ENCODE measurements at regions of chr15 and their contacts with region 1.

Region 1: GRCh38 chr15:33737687-33738601 is 230.4 kb upstream of the CHRM5 start:
- ATAC-seq: peak; percentile 61 to 90 (median 80)
- H3K4me3 ChIP-seq: no peak overlapping the region
- H3K27ac ChIP-seq: no peak overlapping the region
- H3K4me1 ChIP-seq: peaks cover 0 to 11% of the 10 kb centered on the region in 2 donors

Region 2: GRCh38 chr15:32970847-32971246 is 767.1 kb before region 1 on chr15:
- in situ Hi-C with region 1: no loop called
- ATAC-seq: no peak
- H3K4me3 ChIP-seq: no peak overlapping the region
- H3K27ac ChIP-seq: no peak overlapping the region
- H3K4me1 ChIP-seq: no peaks in the 10 kb centered on the region

Region 3: DNA sequence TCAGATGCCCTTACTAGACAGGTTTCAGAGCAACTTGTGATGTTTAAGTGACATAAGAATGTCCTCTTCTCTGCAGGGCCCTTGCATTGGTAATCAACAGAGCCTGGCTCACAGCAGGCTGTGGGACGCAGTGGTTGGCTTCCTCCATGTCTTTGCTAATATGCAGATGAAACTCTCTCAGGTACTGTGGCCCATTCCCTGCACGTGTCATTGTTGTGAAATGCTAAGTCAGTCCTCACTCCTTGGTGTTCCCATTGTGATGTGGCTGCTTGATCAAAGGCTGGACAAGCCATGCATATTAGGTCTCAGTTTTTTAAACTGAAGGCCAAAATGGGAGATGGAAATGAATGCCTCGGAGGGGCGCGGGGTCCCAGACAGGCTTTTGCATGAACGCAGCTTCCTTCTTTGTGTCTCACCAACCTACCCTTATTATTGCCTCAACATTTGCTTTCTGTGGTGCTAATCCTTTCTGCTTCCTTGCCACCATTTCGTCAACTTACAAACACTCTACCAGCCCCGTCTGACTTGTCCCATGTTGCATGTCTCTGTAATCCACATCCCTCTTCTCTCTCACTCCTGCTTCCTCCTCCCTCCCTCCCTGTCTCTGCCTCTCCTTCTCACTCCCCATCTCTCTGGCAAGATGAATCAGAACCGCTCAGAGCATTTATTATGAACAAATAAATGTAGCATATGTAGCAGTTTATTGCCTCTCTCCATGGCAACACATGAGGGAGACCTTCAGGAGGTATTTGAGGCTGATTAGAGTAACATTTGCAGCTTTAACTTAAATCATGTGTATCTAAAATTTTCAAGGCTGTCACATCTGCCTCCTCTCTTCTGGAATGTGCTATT is 97.2 kb after region 1 on chr15:
- in situ Hi-C with region 1: loop called in 1 of 9 experiments (anchors 25 kb)
- ATAC-seq: peak in 7 of 8 experiments; percentile 25 to 68 (median 47)
- H3K4me3 ChIP-seq: no peak overlapping the region
- H3K27ac ChIP-seq: no peak overlapping the region
- H3K4me1 ChIP-seq: peaks cover 7 to 8% of the 10 kb centered on the region in 2 donors

Region 4: GRCh38 chr15:33915571-33916407 is 177.8 kb after region 1 on chr15:
- in situ Hi-C with region 1: no loop called
- ATAC-seq: peak in 4 of 8 experiments; percentile 40 to 96 (median 92)
- H3K4me3 ChIP-seq: no peak overlapping the region
- H3K27ac ChIP-seq: no peak overlapping the region
- H3K4me1 ChIP-seq: no peaks in the 10 kb centered on the region

Region 5: DNA sequence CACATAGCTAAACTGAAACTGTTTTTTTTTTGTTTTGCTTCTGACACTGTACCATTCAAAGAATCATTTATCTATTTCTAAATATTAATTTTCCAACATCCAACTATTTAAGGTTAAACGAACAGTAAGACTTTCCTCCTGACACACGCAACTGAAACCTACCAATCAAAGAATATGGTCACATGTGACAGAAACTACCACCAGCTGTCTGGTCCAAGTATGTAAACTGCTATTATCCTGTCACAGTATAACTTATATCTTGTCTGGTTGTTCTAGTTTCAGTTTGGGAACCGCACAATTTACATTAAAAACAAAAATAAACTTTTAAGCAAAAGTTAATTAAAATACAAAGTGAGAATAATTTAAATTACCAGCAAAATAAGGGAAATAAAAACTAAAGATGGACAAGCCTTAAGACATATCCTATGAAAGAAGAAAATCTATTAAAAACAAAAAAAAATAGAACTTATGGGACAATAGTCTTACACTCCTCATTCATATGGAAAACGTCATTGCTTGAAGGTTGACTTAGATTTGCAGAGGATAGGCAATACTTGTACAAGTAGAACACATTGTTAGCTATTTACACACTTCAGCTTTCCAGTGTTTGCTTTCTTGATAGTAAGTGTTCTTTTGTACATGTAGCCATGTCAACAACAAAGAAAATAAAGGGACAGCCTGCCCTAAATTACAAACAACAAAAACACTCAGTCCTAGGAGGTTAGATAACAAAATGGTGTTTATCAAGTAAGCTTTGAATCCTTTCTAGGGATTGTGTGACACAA is 203.5 kb after region 1 on chr15:
- in situ Hi-C with region 1: no loop called
- ATAC-seq: peak in 1 of 8 experiments; percentile 57
- H3K4me3 ChIP-seq: no peak overlapping the region
- H3K27ac ChIP-seq: no peak overlapping the region
- H3K4me1 ChIP-seq: no peaks in the 10 kb centered on the region

Region 6: GRCh38 chr15:33963831-33964664 is 226.1 kb after region 1 on chr15:
- in situ Hi-C with region 1: loop called in 2 of 9 experiments (anchors 25 kb)
- ATAC-seq: peak in 3 of 8 experiments; percentile 71 to 74 (median 72)
- H3K4me3 ChIP-seq: no peak overlapping the region
- H3K27ac ChIP-seq: no peak overlapping the region
- H3K4me1 ChIP-seq: peaks cover 4 to 13% of the 10 kb centered on the region in 2 donors

Region 7: DNA sequence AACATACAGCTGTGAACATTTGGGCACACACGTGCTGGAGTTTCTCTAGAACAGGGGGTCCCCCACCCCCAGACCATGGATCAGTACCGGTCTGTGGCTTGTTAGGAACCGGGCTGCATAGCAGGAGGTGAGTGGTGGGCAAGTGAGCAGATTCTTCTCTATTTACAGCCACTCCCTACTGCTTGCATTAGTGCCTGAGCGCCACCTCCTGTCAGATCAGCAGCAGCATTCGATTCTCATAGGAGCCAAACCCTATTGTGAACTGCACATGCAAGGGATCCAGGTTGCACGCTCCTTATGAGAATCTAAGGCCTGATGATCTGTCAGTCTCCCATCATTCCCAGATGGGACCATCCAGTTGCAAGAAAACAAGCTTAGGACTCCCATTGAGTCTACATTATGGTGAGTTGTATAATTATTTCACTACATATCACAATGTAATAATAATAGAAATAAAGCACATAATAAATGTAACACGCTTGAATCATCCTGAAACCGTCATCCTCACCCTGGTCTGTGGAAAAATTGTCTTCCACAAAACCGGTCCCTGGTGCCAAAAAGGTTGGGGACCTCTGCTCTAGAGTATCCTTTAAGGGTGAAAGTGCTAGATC is 256.2 kb after region 1 on chr15:
- in situ Hi-C with region 1: loop called in 2 of 9 experiments (anchors 25 kb)
- ATAC-seq: peak in 3 of 8 experiments; percentile 69 to 93 (median 83)
- H3K4me3 ChIP-seq: no peak overlapping the region
- H3K27ac ChIP-seq: no peak overlapping the region
- H3K4me1 ChIP-seq: no peaks in the 10 kb centered on the region

Measured in motor neuron (in vitro differentiated cells).